A549 (cell line): ENCODE measurements at regions of chr10 and their contacts with region 1.

Region 1: GRCh38 chr10:30241422-30242110 is 107.5 kb downstream of the MTPAP start:
- DNase-seq: no peak
- ATAC-seq: no peak
- H3K4me3 ChIP-seq: no peak overlapping the region
- H3K27ac ChIP-seq: no peak overlapping the region
- H3K4me1 ChIP-seq: no peaks in the 10 kb centered on the region
- CTCF ChIP-seq: no peak
- EP300 ChIP-seq: no peak
- POLR2A ChIP-seq: no peak
- RAD21 ChIP-seq: no peak

Region 2: DNA sequence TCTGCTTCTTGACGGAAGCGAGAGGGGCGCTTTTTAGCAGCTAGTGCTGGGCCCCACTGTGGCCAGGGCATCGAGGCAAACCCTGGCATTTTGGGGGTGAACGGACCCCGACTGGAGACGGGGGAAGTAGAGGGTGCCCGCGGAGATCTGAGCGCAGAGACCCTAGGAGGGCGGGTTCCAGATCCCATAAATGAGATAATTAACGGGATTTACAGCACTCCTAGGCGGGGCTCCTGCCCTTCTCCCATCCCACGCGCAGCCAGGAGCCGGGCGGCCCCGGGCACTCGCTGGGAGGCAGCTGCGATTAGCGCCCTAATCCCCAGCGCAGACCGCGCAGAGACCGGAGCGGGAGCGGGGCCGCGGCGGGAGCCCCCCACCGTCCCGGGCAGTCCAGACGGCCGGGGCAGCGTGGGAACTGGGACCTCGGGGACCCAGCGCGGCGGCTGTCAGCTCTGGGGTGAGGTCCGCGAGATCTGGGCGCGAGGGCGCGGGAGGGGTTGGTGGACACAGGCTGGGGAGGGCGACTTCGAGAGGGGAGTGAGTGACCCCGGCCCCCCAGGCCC is 182.9 kb before region 1 on chr10:
- CTCF ChIA-PET with region 1: interaction called, 12 read pairs
- POLR2A ChIA-PET with region 1: no interaction called
- DNase-seq: peak in 1 of 2 experiments; percentile 22
- ATAC-seq: peak; percentile 67 to 68
- H3K4me3 ChIP-seq: peak overlapping the region; percentile 93
- H3K27ac ChIP-seq: peak overlapping the region; percentile 83 to 91
- H3K4me1 ChIP-seq: peaks cover 36% of the 10 kb centered on the region
- CTCF ChIP-seq: no peak
- EP300 ChIP-seq: no peak
- POLR2A ChIP-seq: no peak
- RAD21 ChIP-seq: no peak